ENCODE measurements at regions of chr17 and their contacts with region 1.

Region 1: GRCh38 chr17:45357364-45357997 is 40.7 kb upstream of the MAP3K14 start:
- DNase-seq: no peak
- H3K4me3 Mint-ChIP-seq: no peak overlapping the region
- H3K27ac Mint-ChIP-seq: no peak overlapping the region
- H3K4me1 Mint-ChIP-seq: peaks cover 22% of the 10 kb centered on the region
- H3K27me3 Mint-ChIP-seq: no peaks in the 10 kb centered on the region

Region 2: DNA sequence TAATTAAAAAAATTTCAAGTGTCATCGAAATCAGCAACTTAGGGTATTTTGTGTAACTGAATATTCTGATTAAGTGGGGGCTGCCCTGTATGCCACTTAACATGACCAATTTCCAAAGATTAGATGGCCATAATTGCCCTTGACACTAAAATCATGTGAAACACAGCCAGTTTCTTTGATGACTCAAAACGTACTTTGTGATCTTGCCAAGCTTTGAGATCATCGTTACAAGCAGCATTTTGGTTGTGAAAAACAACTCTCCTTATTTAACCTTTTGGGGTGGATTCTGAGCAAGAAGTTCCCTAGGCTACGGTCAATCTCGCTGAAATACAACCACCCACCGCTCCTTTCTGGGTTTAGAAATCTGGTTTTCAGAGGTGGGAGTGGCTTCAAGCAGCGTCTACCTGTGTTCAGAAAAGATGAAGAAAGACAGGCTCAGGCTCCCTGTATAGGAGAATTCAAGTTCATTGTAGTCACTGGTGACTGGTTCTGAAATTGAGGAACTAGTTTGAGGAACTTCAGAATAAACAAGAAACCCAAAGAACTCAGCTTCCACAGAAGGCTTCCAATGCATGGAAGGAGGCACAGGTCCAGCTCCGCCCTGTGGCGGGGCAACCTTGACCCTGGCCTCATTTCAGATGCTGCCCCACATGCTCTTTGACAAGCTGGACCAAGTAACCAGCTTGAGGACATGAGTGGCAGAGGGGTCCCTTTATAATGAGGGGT is 50.0 kb before region 1 on chr17:
- CTCF ChIA-PET with region 1: interaction called, 7 read pairs
- intact Hi-C with region 1: loop called (anchors 1 kb)
- DNase-seq: peak; percentile 77
- H3K4me3 Mint-ChIP-seq: peak overlapping the region; percentile 48
- H3K27ac Mint-ChIP-seq: peak overlapping the region; percentile 91
- H3K4me1 Mint-ChIP-seq: peaks cover 87% of the 10 kb centered on the region
- H3K27me3 Mint-ChIP-seq: no peaks in the 10 kb centered on the region

Region 3: DNA sequence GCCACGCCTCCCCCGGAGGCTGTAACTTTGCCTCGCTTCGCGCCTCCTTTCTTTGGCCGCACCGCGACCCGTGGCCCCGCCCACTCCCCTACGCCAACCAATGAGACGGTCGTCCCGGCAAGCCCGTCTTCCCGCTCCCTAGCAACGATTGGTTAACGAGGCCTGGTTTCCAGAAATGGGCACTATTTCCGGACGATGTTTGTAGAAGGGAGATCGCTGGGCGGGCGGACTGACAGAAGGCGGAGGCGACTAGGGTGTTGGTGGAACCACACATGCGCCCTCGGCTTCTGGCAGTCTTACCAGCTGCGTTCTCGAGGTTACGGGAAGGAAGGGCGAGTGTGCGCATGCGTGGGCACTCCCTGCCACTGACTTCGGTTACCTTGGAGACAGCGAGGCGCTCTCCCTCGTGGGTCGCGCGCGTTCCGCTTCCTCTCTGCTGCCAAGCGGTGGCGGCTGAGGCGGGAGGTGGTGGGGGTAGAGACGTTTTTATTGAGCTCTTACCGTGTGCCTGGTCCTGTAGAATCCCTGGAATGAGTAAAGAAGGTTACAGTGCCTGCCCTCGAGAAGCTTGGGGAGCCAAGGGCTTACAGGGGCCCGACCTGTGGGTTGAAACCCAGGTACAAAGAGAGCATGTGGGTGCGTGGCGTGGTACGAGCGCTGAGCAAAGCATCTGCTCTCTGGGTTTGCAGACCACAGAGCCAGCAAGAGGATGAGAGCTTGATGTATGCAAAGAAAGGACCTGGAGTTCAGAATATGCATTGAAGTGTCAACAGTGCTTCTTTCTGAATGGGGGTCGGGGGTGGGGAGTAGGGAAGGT is 40.2 kb before region 1 on chr17:
- CTCF ChIA-PET with region 1: interaction called, 7 read pairs
- intact Hi-C with region 1: loop called (anchors 1 kb)
- DNase-seq: peak; percentile 100
- H3K4me3 Mint-ChIP-seq: peak overlapping the region; percentile 85
- H3K27ac Mint-ChIP-seq: peak overlapping the region; percentile 86
- H3K4me1 Mint-ChIP-seq: peaks cover 67% of the 10 kb centered on the region
- H3K27me3 Mint-ChIP-seq: no peaks in the 10 kb centered on the region

Region 4: GRCh38 chr17:45428050-45428617 is 70.7 kb after region 1 on chr17:
- CTCF ChIA-PET with region 1: no interaction called
- intact Hi-C with region 1: no loop called
- DNase-seq: peak; percentile 84
- H3K4me3 Mint-ChIP-seq: peak overlapping the region; percentile 60
- H3K27ac Mint-ChIP-seq: no peak overlapping the region
- H3K4me1 Mint-ChIP-seq: peaks cover 18% of the 10 kb centered on the region
- H3K27me3 Mint-ChIP-seq: peaks cover 5% of the 10 kb centered on the region

Measured in activated naive CD4-positive, alpha-beta T cell treated with anti-CD3 and anti-CD28 coated beads for 36 hours (primary cell).